Dendritic cell treated with granulocyte-macrophage colony-stimulating factor and Interleukin-4, amounts not matched to agents 40 ng/mL and 50 ng/mL, for 4 days (primary cell): ENCODE measurements at regions of chr7 and their contacts with region 1.

Region 1: GRCh38 chr7:7212612-7213011 is 30.3 kb downstream of the C1GALT1 start:
- H3K4me3 Mint-ChIP-seq: no peak overlapping the region
- H3K27ac Mint-ChIP-seq: no peak overlapping the region
- H3K4me1 Mint-ChIP-seq: no peaks in the 10 kb centered on the region
- H3K27me3 Mint-ChIP-seq: no peaks in the 10 kb centered on the region

Region 2: DNA sequence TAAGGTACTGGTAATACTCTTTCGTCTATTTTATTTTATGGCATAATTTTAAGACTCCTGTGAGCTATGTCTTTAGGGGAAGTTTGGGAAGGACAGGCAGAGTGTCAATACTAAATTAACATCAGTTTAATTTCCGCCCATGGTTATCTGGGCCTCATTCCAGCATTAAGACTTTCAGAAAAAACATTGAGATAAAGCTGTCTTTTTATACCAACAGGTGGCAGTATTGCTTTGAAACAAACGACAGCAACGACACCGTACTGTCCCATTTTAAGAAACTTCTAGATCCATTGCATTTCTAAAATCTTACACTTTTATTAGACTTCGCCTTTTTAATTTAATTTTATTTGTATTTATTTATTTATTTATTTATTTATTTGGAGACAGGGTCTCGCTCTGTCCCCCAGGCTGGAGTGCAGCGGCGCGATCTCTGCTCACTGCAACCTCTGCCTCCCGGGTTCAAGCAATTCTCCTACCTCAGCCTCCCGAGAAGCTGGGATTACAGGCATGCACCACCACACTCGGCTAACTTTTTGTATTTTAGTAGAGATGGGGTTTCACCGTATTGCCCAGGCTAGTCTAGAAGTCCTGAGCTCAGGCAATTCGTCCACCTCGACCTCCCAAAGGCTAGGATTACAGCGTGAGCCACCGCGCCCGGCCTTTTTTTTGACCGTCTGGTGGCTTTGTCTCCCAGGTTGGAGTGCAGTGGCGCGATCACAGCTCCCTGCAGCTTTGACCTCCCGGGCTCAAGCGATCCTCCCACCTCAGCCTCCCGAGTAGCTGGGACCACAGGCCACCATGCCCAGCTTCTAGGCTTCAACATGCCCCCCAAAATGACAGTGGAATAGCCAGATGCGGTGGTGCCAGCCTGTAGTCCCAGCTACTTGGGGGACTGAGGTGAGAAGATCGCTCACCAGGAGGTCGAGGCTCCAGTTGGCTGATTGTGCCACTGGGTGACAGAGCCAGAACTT is 109.0 kb before region 1 on chr7:
- intact Hi-C with region 1: loop called (anchors 10 kb)
- H3K4me3 Mint-ChIP-seq: no peak overlapping the region
- H3K27ac Mint-ChIP-seq: peak overlapping the region; percentile 50
- H3K4me1 Mint-ChIP-seq: peaks cover 17% of the 10 kb centered on the region
- H3K27me3 Mint-ChIP-seq: peaks cover 1% of the 10 kb centered on the region

Region 3: GRCh38 chr7:7323352-7323751 is 110.7 kb after region 1 on chr7:
- intact Hi-C with region 1: no loop called
- H3K4me3 Mint-ChIP-seq: no peak overlapping the region
- H3K27ac Mint-ChIP-seq: no peak overlapping the region
- H3K4me1 Mint-ChIP-seq: no peaks in the 10 kb centered on the region
- H3K27me3 Mint-ChIP-seq: peaks cover 2% of the 10 kb centered on the region